Activated CD8-positive, alpha-beta T cell treated with anti-CD3 and anti-CD28 coated beads, Interleukin-2, amount 10 ng/mL, durations not matched to agents 7 days and 5 days (primary cell): ENCODE measurements at regions of chr9 and their contacts with region 1.

Region 1: GRCh38 chr9:94213511-94214124 is 45.5 kb upstream of the ZNF169 start:
- DNase-seq: peak; percentile 86
- ATAC-seq: peak; percentile 97
- H3K4me3 Mint-ChIP-seq: peak overlapping the region; percentile 22
- H3K27ac Mint-ChIP-seq: no peak overlapping the region
- H3K4me1 Mint-ChIP-seq: peaks cover 4% of the 10 kb centered on the region
- H3K27me3 Mint-ChIP-seq: peaks cover 13% of the 10 kb centered on the region

Region 2: GRCh38 chr9:94014065-94014654 is 199.5 kb before region 1 on chr9:
- CTCF ChIA-PET with region 1: interaction called, 49 read pairs
- POLR2A ChIA-PET with region 1: no interaction called
- DNase-seq: no peak
- ATAC-seq: no peak
- H3K4me3 Mint-ChIP-seq: no peak overlapping the region
- H3K27ac Mint-ChIP-seq: no peak overlapping the region
- H3K4me1 Mint-ChIP-seq: peaks cover 4% of the 10 kb centered on the region
- H3K27me3 Mint-ChIP-seq: no peaks in the 10 kb centered on the region

Region 3: DNA sequence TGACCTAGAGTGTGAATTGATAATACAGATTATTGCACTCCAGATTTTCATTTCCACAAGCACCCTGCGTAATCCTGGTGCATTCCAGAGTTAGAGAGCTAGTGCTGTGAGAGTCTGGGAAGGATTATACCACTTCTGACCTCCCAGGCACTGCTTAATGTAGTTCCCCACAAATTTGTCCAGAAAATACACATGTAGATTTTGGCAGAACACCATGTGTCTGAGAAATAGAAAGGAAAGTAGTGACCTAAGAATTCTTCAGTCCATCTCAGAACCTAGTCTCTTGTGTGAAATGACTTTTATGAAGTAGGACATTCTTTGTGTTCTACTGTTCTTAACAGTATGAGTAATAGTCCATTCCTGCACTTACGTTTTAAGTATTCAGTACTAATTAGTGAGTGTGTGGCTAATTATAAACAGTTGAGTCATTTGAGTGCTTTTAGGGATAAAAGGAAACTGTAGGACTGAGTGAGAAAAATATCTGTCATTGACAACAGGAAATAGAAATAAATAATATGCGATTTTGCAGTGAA is 157.1 kb before region 1 on chr9:
- CTCF ChIA-PET with region 1: interaction called, 15 read pairs
- POLR2A ChIA-PET with region 1: no interaction called
- DNase-seq: no peak
- ATAC-seq: no peak
- H3K4me3 Mint-ChIP-seq: no peak overlapping the region
- H3K27ac Mint-ChIP-seq: no peak overlapping the region
- H3K4me1 Mint-ChIP-seq: peaks cover 7% of the 10 kb centered on the region
- H3K27me3 Mint-ChIP-seq: no peaks in the 10 kb centered on the region

Region 4: DNA sequence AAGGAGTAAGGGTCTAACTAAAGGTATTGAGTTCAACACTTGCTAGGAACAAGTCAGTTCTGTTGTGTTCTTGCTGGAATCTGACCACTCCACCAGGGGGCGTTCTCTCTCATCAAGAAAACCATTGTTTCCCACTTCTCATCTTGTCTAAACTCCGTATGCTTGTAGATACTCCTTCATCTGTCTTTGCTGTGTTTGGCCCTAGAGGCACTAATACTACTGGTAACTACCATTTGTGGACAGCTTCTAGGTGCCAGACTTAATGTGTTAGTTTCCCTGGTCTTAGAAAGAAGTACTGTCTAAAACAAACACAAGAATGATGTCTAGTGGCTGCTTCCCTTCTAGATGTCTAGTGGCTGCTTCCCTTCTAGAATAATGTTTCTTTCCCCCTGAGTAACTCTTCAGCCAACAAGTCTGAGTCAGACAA is 148.1 kb before region 1 on chr9:
- CTCF ChIA-PET with region 1: interaction called, 141 read pairs
- POLR2A ChIA-PET with region 1: no interaction called
- DNase-seq: peak; percentile 85
- ATAC-seq: peak; percentile 67
- H3K4me3 Mint-ChIP-seq: no peak overlapping the region
- H3K27ac Mint-ChIP-seq: no peak overlapping the region
- H3K4me1 Mint-ChIP-seq: peaks cover 4% of the 10 kb centered on the region
- H3K27me3 Mint-ChIP-seq: no peaks in the 10 kb centered on the region

Region 5: GRCh38 chr9:94228616-94229015 is 15.0 kb after region 1 on chr9:
- CTCF ChIA-PET with region 1: no interaction called
- POLR2A ChIA-PET with region 1: no interaction called
- DNase-seq: no peak
- ATAC-seq: no peak
- H3K4me3 Mint-ChIP-seq: no peak overlapping the region
- H3K27ac Mint-ChIP-seq: no peak overlapping the region
- H3K4me1 Mint-ChIP-seq: no peaks in the 10 kb centered on the region
- H3K27me3 Mint-ChIP-seq: peaks cover 31% of the 10 kb centered on the region